CD8-positive, alpha-beta memory T cell (primary cell): ENCODE measurements at regions of chr13 and their contacts with region 1.

Region 1: GRCh38 chr13:46181840-46182490 is at the start of gene LCP1:
- DNase-seq: peak; percentile 60 to 91 (median 90)
- H3K4me3 ChIP-seq: peak within 1 kb of the TSS; percentile 81
- H3K4me3 Mint-ChIP-seq: peak within 1 kb of the TSS; percentile 97 to 100 (median 98)
- H3K27ac ChIP-seq: peak within 1 kb of the TSS; percentile 82
- H3K27ac Mint-ChIP-seq: peak within 1 kb of the TSS; percentile 89 to 99 (median 97)
- H3K4me1 ChIP-seq: peaks cover 44% of the 10 kb centered on the region
- H3K4me1 Mint-ChIP-seq: peaks cover 56 to 67% (median 58%) of the 10 kb centered on the region in 3 donors
- H3K27me3 ChIP-seq: no peaks in the 10 kb centered on the region
- H3K27me3 Mint-ChIP-seq: peaks cover 0 to 7% of the 10 kb centered on the region in 2 donors
- total RNA-seq, gene LCP1: 838 to 869 TPM

Region 2: DNA sequence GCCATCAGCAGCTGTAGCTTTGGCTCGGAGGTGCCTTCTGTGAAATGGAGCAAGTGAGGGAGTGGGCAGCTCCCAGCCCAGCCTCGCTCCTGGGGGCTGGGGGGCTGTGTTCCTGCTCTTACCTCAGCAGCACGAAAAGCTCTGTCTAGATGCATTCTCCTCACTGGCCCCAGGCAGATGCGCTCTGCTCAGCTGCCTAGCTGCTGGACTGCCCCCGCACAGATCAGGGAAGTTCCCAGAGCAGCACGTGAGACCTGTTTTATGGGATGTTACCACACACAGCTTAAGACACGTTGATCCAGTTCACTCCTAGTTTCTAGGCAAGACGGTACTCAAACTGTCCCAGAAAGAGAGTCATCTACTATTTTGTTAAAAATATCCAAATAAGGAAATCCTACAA is 13.6 kb before region 1 on chr13:
- CTCF ChIA-PET with region 1: interaction called, 105 read pairs
- POLR2A ChIA-PET with region 1: interaction called, 50 read pairs
- DNase-seq: peak in 4 of 5 donors; percentile 37 to 63 (median 50)
- H3K4me3 ChIP-seq: peak overlapping the region; percentile 3
- H3K4me3 Mint-ChIP-seq: peak overlapping the region; percentile 57 to 98 (median 79)
- H3K27ac ChIP-seq: no peak overlapping the region
- H3K27ac Mint-ChIP-seq: peak overlapping the region; percentile 77 to 99 (median 98)
- H3K4me1 ChIP-seq: peaks cover 96% of the 10 kb centered on the region
- H3K4me1 Mint-ChIP-seq: peaks cover 90 to 98% (median 98%) of the 10 kb centered on the region in 3 donors
- H3K27me3 ChIP-seq: no peaks in the 10 kb centered on the region
- H3K27me3 Mint-ChIP-seq: no peaks in the 10 kb centered on the region